ENCODE measurements at regions of chr11 and their contacts with region 1.

Region 1: DNA sequence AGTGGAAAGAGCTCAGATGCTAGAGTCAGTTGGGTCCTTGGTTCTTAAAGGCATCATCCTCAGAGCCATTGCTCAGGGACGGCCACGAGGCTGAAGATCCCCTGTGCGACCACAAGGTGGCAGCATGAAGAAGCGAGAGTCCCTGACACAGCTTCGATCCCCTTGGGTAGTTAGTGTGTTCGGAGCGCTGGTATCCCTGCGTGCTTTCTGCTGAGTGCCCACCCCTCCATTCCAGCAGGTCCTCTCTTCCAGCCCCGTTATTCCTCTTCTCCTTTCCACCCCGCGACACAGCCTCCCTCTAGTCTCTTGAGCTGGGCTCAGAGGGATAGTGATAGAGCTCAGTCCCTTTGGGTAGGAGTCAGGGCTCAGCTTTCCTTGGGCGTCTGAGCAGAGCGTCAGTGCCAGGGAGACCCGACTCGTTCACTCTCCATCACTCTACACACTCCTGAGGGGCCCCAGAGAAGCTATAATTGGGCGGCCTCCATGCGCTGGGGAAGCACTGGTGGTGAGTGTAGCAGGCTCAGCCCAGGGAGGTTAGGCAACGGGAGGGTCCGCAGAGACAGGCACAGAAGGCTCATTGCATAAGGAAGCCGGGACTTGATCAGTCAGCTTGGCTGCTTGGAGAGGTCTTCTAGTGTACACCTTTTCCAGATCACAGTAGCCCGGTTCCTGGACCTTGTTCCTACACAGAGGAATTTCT is at the start of gene OR51D1:
- DNase-seq: peak; percentile 89
- H3K4me3 ChIP-seq: peak within 1 kb of the TSS; percentile 28 to 49 (median 38)
- H3K27ac ChIP-seq: no peak within 1 kb of the TSS
- H3K4me1 ChIP-seq: peaks cover 4 to 18% (median 7%) of the 10 kb centered on the region in 4 donors
- H3K27me3 ChIP-seq: no peaks in the 10 kb centered on the region
- CTCF ChIP-seq: peak; percentile 80 to 94 (median 85)
- EP300 ChIP-seq: no peak
- POLR2A ChIP-seq: no peak
- total RNA-seq, gene OR51D1: not detected

Region 2: GRCh38 chr11:4826425-4826824 is 189.3 kb after region 1 on chr11:
- intact Hi-C with region 1: loop called (anchors 2 kb)
- DNase-seq: no peak
- H3K4me3 ChIP-seq: no peak overlapping the region
- H3K27ac ChIP-seq: no peak overlapping the region
- H3K4me1 ChIP-seq: no peaks in the 10 kb centered on the region
- H3K27me3 ChIP-seq: no peaks in the 10 kb centered on the region
- CTCF ChIP-seq: peak; percentile 44 to 56 (median 48)
- EP300 ChIP-seq: no peak
- POLR2A ChIP-seq: no peak

Region 3: GRCh38 chr11:5004424-5005274 is 367.5 kb after region 1 on chr11:
- intact Hi-C with region 1: loop called (anchors 5 kb)
- DNase-seq: no peak
- H3K4me3 ChIP-seq: no peak overlapping the region
- H3K27ac ChIP-seq: no peak overlapping the region
- H3K4me1 ChIP-seq: no peaks in the 10 kb centered on the region
- H3K27me3 ChIP-seq: peaks cover 0 to 11% (median 0%) of the 10 kb centered on the region in 4 donors
- CTCF ChIP-seq: peak; percentile 33 to 50 (median 46)
- EP300 ChIP-seq: no peak
- POLR2A ChIP-seq: no peak

Measured in esophagus muscularis mucosa (tissue), 4 donors.